HEK293 (cell line): ENCODE measurements at regions of chr3 and their contacts with region 1.

Region 1: DNA sequence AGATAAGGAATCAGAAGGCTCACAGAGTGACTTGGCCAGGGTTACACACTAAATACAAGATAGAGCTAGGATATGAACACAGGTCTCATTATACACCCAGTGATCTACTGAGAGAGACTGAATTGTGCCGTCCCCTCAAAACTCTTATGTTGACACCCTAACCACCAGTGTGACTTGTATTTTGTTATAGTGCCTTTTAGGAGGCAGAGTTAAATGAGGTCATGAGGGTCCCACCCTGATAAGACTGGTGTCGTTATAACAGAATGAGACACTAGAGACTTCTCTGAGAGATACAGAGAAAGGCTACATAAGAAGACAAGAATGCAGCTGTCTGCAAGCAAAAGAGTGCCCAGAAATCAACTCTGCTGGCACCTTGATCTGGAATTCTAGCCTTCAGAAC is 12.6 kb downstream of the KPNA1 start:
- H3K4me3 ChIP-seq: no peak overlapping the region
- H3K27ac ChIP-seq: no peak overlapping the region
- H3K4me1 ChIP-seq: no peaks in the 10 kb centered on the region; the same call in 1 of the 2 replicates
- CTCF ChIP-seq: no peak

Region 2: DNA sequence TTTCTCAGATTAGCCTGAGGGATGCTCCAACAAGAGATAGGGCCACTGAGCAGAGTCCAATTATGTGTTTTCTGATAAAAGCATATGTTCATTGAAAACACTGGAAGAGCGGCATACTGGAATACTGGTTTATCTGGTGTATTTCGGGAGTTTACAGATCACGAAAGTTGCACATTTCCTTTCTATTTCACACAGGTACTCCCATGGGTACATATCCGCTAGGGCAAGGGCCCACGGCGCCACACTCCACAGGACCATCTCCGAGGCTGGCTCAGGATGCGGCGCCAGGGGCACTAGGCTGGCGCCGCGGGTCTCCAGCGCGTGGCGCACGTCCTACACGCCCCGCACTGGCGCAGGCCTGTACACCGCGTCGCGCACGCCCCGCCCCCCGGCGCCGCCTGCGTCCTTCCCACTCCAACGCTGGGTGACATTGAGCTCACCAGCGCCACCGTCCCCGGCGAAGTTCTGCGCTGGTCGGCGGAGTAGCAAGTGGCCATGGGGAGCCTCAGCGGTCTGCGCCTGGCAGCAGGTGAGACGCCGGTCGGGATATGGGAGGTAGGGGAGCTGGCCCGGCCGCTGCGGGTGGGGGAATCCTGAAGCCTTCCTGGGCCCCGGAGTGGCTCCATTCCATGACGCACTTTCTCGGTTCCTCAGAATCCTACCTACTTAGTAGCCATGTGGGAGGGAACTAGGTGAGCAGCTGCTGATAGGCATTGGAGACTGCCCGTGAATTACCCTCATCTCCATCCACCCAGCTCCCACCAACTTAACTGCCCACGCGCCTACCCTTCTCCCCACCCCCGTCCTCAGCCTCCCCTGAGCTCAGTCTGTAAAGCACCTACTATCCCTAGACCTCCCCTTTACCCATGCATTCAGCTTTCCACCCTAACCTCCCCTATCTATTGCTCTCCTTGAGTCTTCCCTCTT is 118.1 kb before region 1 on chr3 and contains the start of gene FAM162A:
- CTCF ChIA-PET with region 1: no interaction called
- POLR2A ChIA-PET with region 1: no interaction called
- H3K4me3 ChIP-seq: peak within 1 kb of the TSS; percentile 96
- H3K27ac ChIP-seq: peak within 1 kb of the TSS; percentile 66
- H3K4me1 ChIP-seq: no peaks in the 10 kb centered on the region
- CTCF ChIP-seq: peak; percentile 94

Region 3: DNA sequence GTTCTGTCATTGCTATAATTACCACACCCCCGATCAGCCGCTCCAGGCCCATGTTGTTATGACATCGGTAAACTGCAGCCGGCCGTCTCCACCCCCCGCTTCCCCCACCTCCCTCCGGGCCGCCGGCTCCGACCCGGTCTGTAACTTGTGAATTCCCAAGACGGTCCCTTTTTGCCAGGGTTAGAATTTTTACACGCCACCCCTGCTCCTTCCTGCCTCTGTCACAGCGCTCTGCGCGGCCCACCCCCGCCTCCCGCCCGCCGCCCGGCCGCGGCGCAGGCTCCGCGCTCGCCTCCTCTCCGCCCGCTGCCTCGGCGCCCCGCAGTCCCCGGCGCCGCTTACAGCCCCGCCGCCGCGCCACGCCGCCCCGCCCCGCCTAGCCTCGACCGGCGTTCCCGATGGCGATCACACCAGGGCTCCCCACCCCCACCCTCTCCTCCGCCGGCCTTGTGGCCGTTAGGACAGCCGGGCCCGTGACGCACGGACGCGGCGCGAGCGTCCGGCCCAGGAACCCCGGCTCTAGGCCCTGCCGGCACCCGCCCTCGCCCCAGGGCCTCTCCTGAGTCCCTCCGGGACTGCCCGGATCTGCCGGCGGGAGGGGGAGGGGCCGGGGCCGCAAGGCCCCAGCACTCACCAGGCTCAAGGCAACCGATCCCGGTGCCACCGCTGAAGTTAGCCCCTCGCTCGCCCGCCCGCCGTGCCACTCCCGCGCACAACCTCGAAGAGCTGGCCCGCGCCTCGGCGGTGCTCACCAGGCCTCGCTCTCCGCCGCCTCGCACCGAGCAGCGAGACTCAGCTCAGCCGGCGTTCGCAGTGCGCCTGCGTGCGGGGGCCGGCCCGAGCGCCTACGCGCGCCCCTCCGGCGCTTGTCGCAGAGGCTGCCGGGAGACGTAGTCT is 12.2 kb after region 1 on chr3 and contains the start of gene KPNA1:
- CTCF ChIA-PET with region 1: interaction called, 4 read pairs
- POLR2A ChIA-PET with region 1: interaction called, 10 read pairs
- H3K4me3 ChIP-seq: peak within 1 kb of the TSS; percentile 77
- H3K27ac ChIP-seq: peak within 1 kb of the TSS; percentile 98
- H3K4me1 ChIP-seq: peaks cover 7% of the 10 kb centered on the region; the same call in 1 of the 2 replicates
- CTCF ChIP-seq: no peak